ENCODE measurements at regions of chr12 and their contacts with region 1.

Region 1: GRCh38 chr12:6195665-6196535 is 4.3 kb upstream of the CD9 start:
- DNase-seq: peak; percentile 85
- ATAC-seq: peak; percentile 83
- H3K4me3 Mint-ChIP-seq: no peak overlapping the region
- H3K27ac Mint-ChIP-seq: peak overlapping the region; percentile 9
- H3K4me1 Mint-ChIP-seq: peaks cover 21% of the 10 kb centered on the region
- H3K27me3 Mint-ChIP-seq: peaks cover 7% of the 10 kb centered on the region
- CTCF ChIP-seq: peak; percentile 79

Region 2: GRCh38 chr12:6167327-6168259 is 28.3 kb before region 1 on chr12:
- CTCF ChIA-PET with region 1: interaction called, 15 read pairs
- POLR2A ChIA-PET with region 1: interaction called, 6 read pairs
- intact Hi-C with region 1: no loop called
- DNase-seq: peak; percentile 90
- ATAC-seq: peak; percentile 87
- H3K4me3 Mint-ChIP-seq: peak overlapping the region; percentile 33
- H3K27ac Mint-ChIP-seq: peak overlapping the region; percentile 94
- H3K4me1 Mint-ChIP-seq: peaks cover 31% of the 10 kb centered on the region
- H3K27me3 Mint-ChIP-seq: no peaks in the 10 kb centered on the region
- CTCF ChIP-seq: no peak

Region 3: GRCh38 chr12:6182116-6182898 is 13.6 kb before region 1 on chr12:
- CTCF ChIA-PET with region 1: interaction called, 14 read pairs
- POLR2A ChIA-PET with region 1: no interaction called
- intact Hi-C with region 1: no loop called
- DNase-seq: no peak
- ATAC-seq: no peak
- H3K4me3 Mint-ChIP-seq: no peak overlapping the region
- H3K27ac Mint-ChIP-seq: no peak overlapping the region
- H3K4me1 Mint-ChIP-seq: no peaks in the 10 kb centered on the region
- H3K27me3 Mint-ChIP-seq: no peaks in the 10 kb centered on the region
- CTCF ChIP-seq: no peak

Region 4: DNA sequence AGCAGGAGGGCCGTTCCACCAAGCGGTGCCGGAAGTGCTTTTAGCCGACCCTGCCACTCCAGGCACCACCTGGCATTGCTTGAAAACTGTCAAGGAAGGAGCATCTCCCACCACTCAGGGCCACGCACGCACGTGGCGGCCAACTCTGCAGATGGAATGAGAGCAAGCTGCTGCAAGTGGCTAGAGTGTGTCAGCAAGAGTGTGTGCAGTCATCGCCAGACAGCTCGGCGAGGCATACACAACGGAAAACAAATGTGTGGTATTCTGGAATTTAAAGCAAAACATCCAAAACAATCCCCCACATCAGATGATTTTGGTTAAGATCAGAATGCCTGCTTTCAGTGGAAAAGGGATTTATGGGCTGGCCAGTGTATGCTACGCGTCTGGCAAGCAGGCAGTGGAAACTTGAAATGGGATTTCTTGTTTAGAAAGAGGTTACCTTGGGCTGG is 15.5 kb after region 1 on chr12:
- CTCF ChIA-PET with region 1: interaction called, 34 read pairs
- POLR2A ChIA-PET with region 1: no interaction called
- intact Hi-C with region 1: no loop called
- DNase-seq: no peak
- ATAC-seq: no peak
- H3K4me3 Mint-ChIP-seq: no peak overlapping the region
- H3K27ac Mint-ChIP-seq: no peak overlapping the region
- H3K4me1 Mint-ChIP-seq: peaks cover 16% of the 10 kb centered on the region
- H3K27me3 Mint-ChIP-seq: peaks cover 2% of the 10 kb centered on the region
- CTCF ChIP-seq: no peak

Region 5: DNA sequence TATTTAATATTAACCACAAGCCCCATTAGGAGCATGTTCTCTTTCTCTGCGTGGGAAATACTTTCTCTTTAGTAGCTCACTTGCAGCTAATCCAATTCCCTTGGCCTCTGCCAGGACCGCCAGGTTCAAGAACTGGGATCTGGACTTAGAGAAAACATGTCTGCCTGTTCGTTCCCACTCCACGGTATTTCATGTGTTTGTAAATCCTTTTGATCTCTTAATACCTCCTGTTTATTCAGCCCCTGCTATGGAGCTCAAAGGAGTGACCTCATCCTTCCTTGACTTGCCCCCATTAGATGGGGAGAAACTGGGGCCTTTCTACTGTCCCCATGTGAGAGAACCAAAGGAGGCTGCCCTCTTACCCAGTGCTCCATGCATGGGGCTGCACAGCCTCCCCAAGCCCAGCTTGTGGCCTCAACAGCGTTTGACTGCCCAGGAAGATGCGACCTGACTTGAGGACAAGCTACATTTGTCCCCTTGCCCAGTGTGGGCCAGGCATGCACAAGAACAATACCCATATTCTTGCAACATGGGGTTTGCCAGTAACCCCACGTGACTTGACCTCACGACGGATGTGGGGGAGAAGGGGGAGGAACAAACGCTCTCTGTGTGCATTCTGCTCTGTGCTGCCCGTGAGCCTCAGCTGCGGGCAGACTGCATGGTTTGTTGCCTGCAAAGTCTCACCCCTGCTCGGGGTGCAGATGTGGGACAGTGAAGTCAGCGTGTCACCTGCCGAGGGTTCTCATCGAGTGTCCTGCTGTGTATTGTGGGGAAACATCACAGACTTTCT is 34.6 kb after region 1 on chr12:
- CTCF ChIA-PET with region 1: interaction called, 16 read pairs
- POLR2A ChIA-PET with region 1: interaction called, 3 read pairs
- intact Hi-C with region 1: no loop called
- DNase-seq: peak; percentile 86
- ATAC-seq: peak; percentile 86
- H3K4me3 Mint-ChIP-seq: peak overlapping the region; percentile 56
- H3K27ac Mint-ChIP-seq: peak overlapping the region; percentile 85
- H3K4me1 Mint-ChIP-seq: peaks cover 28% of the 10 kb centered on the region
- H3K27me3 Mint-ChIP-seq: no peaks in the 10 kb centered on the region
- CTCF ChIP-seq: no peak

Region 6: DNA sequence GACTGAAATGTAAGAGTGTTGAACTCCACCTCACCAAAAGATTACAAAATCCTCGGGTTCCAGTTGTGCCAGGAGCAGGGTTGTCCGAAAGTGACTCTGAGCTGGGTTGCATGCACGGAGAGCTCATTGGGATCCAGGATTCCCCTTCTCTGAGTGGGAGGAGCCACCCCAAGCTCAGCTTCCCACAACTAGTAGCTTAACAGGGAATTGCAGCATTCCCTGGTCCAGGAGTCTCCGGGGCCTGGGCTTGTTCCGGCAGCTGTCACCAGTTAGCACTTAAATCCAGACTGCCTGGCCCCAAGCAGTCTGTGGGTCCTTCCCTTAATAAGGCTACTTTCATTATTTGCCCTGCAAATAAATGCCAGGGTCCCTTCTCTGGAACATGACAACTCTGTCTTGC is 54.4 kb after region 1 on chr12:
- CTCF ChIA-PET with region 1: interaction called, 17 read pairs
- POLR2A ChIA-PET with region 1: no interaction called
- intact Hi-C with region 1: no loop called
- DNase-seq: no peak
- ATAC-seq: no peak
- H3K4me3 Mint-ChIP-seq: no peak overlapping the region
- H3K27ac Mint-ChIP-seq: no peak overlapping the region
- H3K4me1 Mint-ChIP-seq: no peaks in the 10 kb centered on the region
- H3K27me3 Mint-ChIP-seq: peaks cover 2% of the 10 kb centered on the region
- CTCF ChIP-seq: no peak

Region 7: GRCh38 chr12:6285063-6285477 is 89.2 kb after region 1 on chr12:
- CTCF ChIA-PET with region 1: interaction called, 160 read pairs
- POLR2A ChIA-PET with region 1: no interaction called
- intact Hi-C with region 1: loop called (anchors 2 kb)
- DNase-seq: peak; percentile 63
- ATAC-seq: peak; percentile 90
- H3K4me3 Mint-ChIP-seq: no peak overlapping the region
- H3K27ac Mint-ChIP-seq: no peak overlapping the region
- H3K4me1 Mint-ChIP-seq: no peaks in the 10 kb centered on the region
- H3K27me3 Mint-ChIP-seq: peaks cover 9% of the 10 kb centered on the region
- CTCF ChIP-seq: peak; percentile 98

Region 8: DNA sequence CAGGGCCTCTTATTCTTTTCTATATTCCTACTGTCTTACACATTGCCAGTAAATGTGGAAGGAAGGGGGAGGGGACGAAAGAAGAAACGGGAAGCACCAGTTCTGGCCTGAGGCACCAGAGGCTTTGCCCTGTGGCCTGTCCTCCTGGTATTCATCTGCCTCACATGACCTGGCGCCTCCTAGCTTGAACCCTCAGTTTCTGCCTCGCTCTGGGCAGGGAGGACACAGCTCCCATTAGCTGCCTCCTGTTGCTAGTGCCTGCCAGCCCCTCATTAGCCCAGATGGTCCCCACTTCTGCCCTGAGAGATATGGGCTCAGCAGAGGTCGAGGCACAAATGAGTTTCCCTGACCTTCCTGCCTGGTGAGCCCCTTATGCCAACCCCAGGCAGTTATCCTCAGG is 111.6 kb after region 1 on chr12:
- CTCF ChIA-PET with region 1: no interaction called
- POLR2A ChIA-PET with region 1: no interaction called
- intact Hi-C with region 1: no loop called
- DNase-seq: no peak
- ATAC-seq: no peak
- H3K4me3 Mint-ChIP-seq: no peak overlapping the region
- H3K27ac Mint-ChIP-seq: no peak overlapping the region
- H3K4me1 Mint-ChIP-seq: peaks cover 4% of the 10 kb centered on the region
- H3K27me3 Mint-ChIP-seq: peaks cover 8% of the 10 kb centered on the region
- CTCF ChIP-seq: no peak